ENCODE measurements at regions of chr5 and their contacts with region 1.

Region 1: DNA sequence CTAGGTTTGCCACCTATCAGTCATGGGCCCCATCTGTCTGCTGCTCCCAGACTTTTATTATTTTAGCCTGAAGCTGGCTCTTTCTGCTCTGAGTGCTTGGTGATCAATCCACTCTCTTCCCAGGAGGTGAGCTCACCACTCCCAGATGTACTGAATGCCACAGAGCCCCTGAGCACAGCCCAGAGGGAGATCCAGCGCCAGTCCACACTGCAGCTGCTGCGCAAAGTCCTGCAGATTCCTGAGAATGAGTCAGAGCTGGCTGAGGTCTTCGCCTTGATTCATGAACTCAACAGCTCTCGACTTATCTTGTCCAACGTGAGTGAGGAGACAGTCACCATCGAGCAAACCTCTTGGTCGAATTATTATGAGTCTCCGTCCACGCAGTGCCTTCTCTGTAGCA is 36.0 kb downstream of the HMGXB3 start:
- DNase-seq: peak in 2 of 5 donors; percentile 70 to 81
- ATAC-seq: peak; percentile 45 to 94 (median 90)
- H3K4me3 ChIP-seq: no peak overlapping the region
- H3K27ac ChIP-seq: peak overlapping the region in 5 of 12 donors; percentile 1 to 53 (median 35)
- H3K4me1 ChIP-seq: peaks cover 0 to 15% (median 6%) of the 10 kb centered on the region in 12 donors
- H3K27me3 ChIP-seq: no peaks in the 10 kb centered on the region
- CTCF ChIP-seq: no peak
- POLR2A ChIP-seq: no peak

Region 2: GRCh38 chr5:149837680-149838269 is 198.7 kb before region 1 on chr5:
- intact Hi-C with region 1: no loop called
- DNase-seq: peak in 2 of 5 donors; percentile 63 to 64
- ATAC-seq: peak; percentile 27 to 54 (median 54)
- H3K4me3 ChIP-seq: no peak overlapping the region
- H3K27ac ChIP-seq: peak overlapping the region in 4 of 12 donors; percentile 3 to 27 (median 14)
- H3K4me1 ChIP-seq: peaks cover 0 to 54% (median 21%) of the 10 kb centered on the region in 12 donors
- H3K27me3 ChIP-seq: no peaks in the 10 kb centered on the region
- CTCF ChIP-seq: peak; percentile 31 to 67 (median 49)
- POLR2A ChIP-seq: no peak

Region 3: GRCh38 chr5:149990518-149991376 is 45.8 kb before region 1 on chr5:
- intact Hi-C with region 1: no loop called
- DNase-seq: peak in 4 of 5 donors; percentile 51 to 73 (median 60)
- ATAC-seq: peak in 3 of 4 donors; percentile 74 to 82 (median 82)
- H3K4me3 ChIP-seq: no peak overlapping the region
- H3K27ac ChIP-seq: no peak overlapping the region
- H3K4me1 ChIP-seq: peaks cover 0 to 16% (median 0%) of the 10 kb centered on the region in 12 donors
- H3K27me3 ChIP-seq: no peaks in the 10 kb centered on the region
- CTCF ChIP-seq: peak; percentile 87 to 96 (median 94)
- POLR2A ChIP-seq: no peak

Region 4: DNA sequence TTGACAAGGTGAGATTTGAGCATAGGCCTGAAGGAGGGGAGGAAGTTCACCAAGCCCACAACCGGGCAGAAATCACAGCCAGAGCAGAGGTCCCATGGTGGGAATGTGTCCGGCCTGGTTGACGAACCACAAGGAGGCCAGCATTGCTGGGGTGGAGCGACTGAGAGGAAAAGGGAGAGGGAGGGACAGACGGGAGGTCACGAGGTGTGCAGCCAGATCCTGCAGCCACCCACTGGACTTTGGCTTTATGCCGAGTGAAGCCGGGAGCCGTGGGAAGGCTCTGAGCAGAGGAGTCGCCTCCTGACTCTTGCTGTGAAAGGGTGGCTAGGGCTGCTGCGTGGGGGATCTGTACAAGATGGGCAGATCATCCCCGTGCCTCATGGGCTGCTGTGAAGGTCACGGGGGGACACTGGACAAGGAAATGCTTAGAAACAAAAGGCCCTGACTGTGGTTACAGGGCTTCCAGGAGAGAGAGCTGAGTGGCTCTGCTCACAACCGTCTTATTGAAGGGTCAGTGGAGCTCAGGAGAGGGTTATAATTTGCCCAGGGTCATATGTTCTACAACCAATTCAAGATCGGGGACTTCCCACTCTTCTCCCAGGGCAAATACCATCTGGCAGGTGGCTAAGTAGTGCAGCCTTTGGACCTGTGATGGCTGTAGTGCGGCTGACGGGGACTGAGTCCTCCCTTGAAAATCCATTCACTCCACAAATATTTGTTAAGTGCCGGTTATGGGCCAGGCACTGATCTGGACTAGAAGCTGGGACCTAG is 391.8 kb after region 1 on chr5:
- intact Hi-C with region 1: loop called in 1 of 10 experiments (anchors 10 kb)
- DNase-seq: peak; percentile 81 to 89 (median 85)
- ATAC-seq: peak; percentile 84 to 95 (median 90)
- H3K4me3 ChIP-seq: no peak overlapping the region
- H3K27ac ChIP-seq: peak overlapping the region in 11 of 12 donors; percentile 38 to 84 (median 66)
- H3K4me1 ChIP-seq: peaks cover 0 to 22% (median 4%) of the 10 kb centered on the region in 12 donors
- H3K27me3 ChIP-seq: no peaks in the 10 kb centered on the region
- CTCF ChIP-seq: no peak
- POLR2A ChIP-seq: no peak